ENCODE measurements at regions of chr7 and their contacts with region 1.

Region 1: GRCh38 chr7:150514748-150515222 is at the start of gene GIMAP7:
- DNase-seq: peak; percentile 77 to 84 (median 79)
- H3K4me3 ChIP-seq: peak within 1 kb of the TSS; percentile 92 to 99
- H3K4me3 Mint-ChIP-seq: peak within 1 kb of the TSS; percentile 97 to 100 (median 100)
- H3K27ac ChIP-seq: peak within 1 kb of the TSS; percentile 77
- H3K27ac Mint-ChIP-seq: peak within 1 kb of the TSS; percentile 94 to 99 (median 97)
- H3K4me1 ChIP-seq: peaks cover 47% of the 10 kb centered on the region
- H3K4me1 Mint-ChIP-seq: peaks cover 36 to 54% (median 42%) of the 10 kb centered on the region in 4 donors
- H3K27me3 ChIP-seq: no peaks in the 10 kb centered on the region
- H3K27me3 Mint-ChIP-seq: no peaks in the 10 kb centered on the region
- total RNA-seq, gene GIMAP7: 464 to 476 TPM

Region 2: GRCh38 chr7:150476285-150476684 is 38.5 kb before region 1 on chr7:
- CTCF ChIA-PET with region 1: interaction called, 11 read pairs
- POLR2A ChIA-PET with region 1: interaction called, 673 read pairs
- intact Hi-C with region 1: loop called (anchors 1 kb)
- DNase-seq: no peak
- H3K4me3 ChIP-seq: no peak overlapping the region
- H3K4me3 Mint-ChIP-seq: peak overlapping the region; percentile 17 to 83 (median 71)
- H3K27ac ChIP-seq: peak overlapping the region; percentile 71
- H3K27ac Mint-ChIP-seq: peak overlapping the region; percentile 96 to 100 (median 99)
- H3K4me1 ChIP-seq: peaks cover 86% of the 10 kb centered on the region
- H3K4me1 Mint-ChIP-seq: peaks cover 70 to 94% (median 85%) of the 10 kb centered on the region in 4 donors
- H3K27me3 ChIP-seq: no peaks in the 10 kb centered on the region
- H3K27me3 Mint-ChIP-seq: no peaks in the 10 kb centered on the region

Region 3: GRCh38 chr7:150556521-150557138 is 41.8 kb after region 1 on chr7:
- CTCF ChIA-PET with region 1: interaction called, 3 read pairs
- POLR2A ChIA-PET with region 1: interaction called, 777 read pairs
- intact Hi-C with region 1: loop called (anchors 2 kb)
- DNase-seq: peak in 4 of 5 donors; percentile 53 to 76 (median 72)
- H3K4me3 ChIP-seq: peak overlapping the region in 1 of 2 donors; percentile 4
- H3K4me3 Mint-ChIP-seq: peak overlapping the region; percentile 34 to 87 (median 78)
- H3K27ac ChIP-seq: peak overlapping the region; percentile 40
- H3K27ac Mint-ChIP-seq: peak overlapping the region; percentile 79 to 96 (median 94)
- H3K4me1 ChIP-seq: peaks cover 64% of the 10 kb centered on the region
- H3K4me1 Mint-ChIP-seq: peaks cover 53 to 87% (median 72%) of the 10 kb centered on the region in 4 donors
- H3K27me3 ChIP-seq: no peaks in the 10 kb centered on the region
- H3K27me3 Mint-ChIP-seq: no peaks in the 10 kb centered on the region

Region 4: GRCh38 chr7:150668472-150668911 is 153.7 kb after region 1 on chr7:
- CTCF ChIA-PET with region 1: interaction called, 5 read pairs
- POLR2A ChIA-PET with region 1: interaction called, 58 read pairs
- intact Hi-C with region 1: no loop called
- DNase-seq: peak; percentile 80 to 88 (median 85)
- H3K4me3 ChIP-seq: peak overlapping the region; percentile 2 to 26
- H3K4me3 Mint-ChIP-seq: peak overlapping the region; percentile 55 to 84 (median 72)
- H3K27ac ChIP-seq: peak overlapping the region; percentile 68
- H3K27ac Mint-ChIP-seq: peak overlapping the region; percentile 82 to 99 (median 98)
- H3K4me1 ChIP-seq: peaks cover 92% of the 10 kb centered on the region
- H3K4me1 Mint-ChIP-seq: peaks cover 63 to 95% (median 79%) of the 10 kb centered on the region in 4 donors
- H3K27me3 ChIP-seq: no peaks in the 10 kb centered on the region
- H3K27me3 Mint-ChIP-seq: no peaks in the 10 kb centered on the region

Region 5: GRCh38 chr7:150716368-150716767 is 201.6 kb after region 1 on chr7 and contains the start of gene GIMAP1:
- CTCF ChIA-PET with region 1: interaction called, 8 read pairs
- POLR2A ChIA-PET with region 1: interaction called, 200 read pairs
- intact Hi-C with region 1: no loop called
- DNase-seq: peak; percentile 74 to 80 (median 79)
- H3K4me3 ChIP-seq: peak within 1 kb of the TSS; percentile 74 to 83
- H3K4me3 Mint-ChIP-seq: peak within 1 kb of the TSS; percentile 94 to 100 (median 98)
- H3K27ac ChIP-seq: peak within 1 kb of the TSS; percentile 74
- H3K27ac Mint-ChIP-seq: peak within 1 kb of the TSS; percentile 88 to 98 (median 97)
- H3K4me1 ChIP-seq: peaks cover 56% of the 10 kb centered on the region
- H3K4me1 Mint-ChIP-seq: peaks cover 48 to 79% (median 65%) of the 10 kb centered on the region in 4 donors
- H3K27me3 ChIP-seq: no peaks in the 10 kb centered on the region
- H3K27me3 Mint-ChIP-seq: no peaks in the 10 kb centered on the region
- total RNA-seq, gene GIMAP1: 93.7 to 97.6 TPM